Endothelial cell of umbilical vein (primary cell): ENCODE measurements at regions of chr4 and their contacts with region 1.

Region 1: GRCh38 chr4:140756319-140757231 is at the start of gene TBC1D9:
- DNase-seq: peak; percentile 97
- H3K4me3 ChIP-seq: peak within 1 kb of the TSS; percentile 69 to 89 (median 79)
- H3K27ac ChIP-seq: peak within 1 kb of the TSS; percentile 98
- H3K4me1 ChIP-seq: peaks cover 14% of the 10 kb centered on the region
- H3K27me3 ChIP-seq: no peaks in the 10 kb centered on the region
- CTCF ChIP-seq: peak; percentile 4 to 9
- POLR2A ChIP-seq: peak; percentile 72
- total RNA-seq, gene TBC1D9: 43.4 and 45.3 TPM in 2 replicates

Region 2: DNA sequence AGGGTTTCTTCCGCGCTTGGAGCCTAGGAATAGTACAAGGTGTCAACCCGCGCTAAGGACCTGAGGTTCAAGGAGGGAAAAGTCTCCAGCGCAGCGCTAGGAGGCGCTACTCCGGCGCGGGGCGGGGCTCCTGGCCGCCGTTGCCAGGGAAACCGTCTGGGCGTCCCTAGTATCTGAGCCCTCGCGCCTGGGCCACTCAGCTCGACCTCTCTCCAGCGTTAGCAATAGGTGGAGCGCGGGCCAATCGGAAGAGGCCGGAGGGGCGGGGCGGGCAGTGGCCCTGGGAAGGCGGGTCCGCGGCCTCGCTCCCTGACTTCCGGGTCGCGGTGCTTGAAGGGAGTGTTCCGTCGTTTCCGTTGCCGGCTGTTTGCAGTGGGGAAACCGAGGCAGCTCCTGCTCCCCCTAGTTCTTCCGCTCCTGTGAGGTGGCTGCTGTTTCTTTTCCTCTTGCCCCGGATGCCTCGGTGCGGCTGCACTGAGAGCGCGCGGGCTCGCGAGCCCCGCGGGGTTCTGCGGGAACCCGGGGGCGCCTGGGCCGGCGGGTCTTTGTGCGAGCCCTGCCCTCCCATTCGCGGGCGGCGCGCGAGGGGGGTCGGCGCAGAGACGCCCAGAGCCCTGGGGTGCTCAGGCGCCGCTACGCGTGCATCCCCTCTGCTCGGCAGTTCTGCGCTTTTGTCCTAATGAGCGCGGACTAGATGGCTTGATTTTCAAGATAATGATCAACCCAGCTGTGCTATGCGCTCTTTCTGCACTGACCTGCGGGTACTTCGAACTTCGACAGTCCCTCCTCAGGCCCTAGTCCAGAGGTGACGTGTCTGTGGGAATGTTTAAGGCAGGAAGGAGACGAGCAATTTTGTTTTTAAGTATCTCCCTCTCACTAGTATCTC is 232.5 kb before region 1 on chr4 and contains the start of gene ELMOD2:
- CTCF ChIA-PET with region 1: no interaction called
- POLR2A ChIA-PET with region 1: no interaction called
- dilution Hi-C with region 1: no loop called
- intact Hi-C with region 1: loop called (anchors 1 kb)
- DNase-seq: peak; percentile 97
- H3K4me3 ChIP-seq: peak within 1 kb of the TSS; percentile 38 to 87 (median 83)
- H3K27ac ChIP-seq: peak within 1 kb of the TSS; percentile 21
- H3K4me1 ChIP-seq: peaks cover 14% of the 10 kb centered on the region
- H3K27me3 ChIP-seq: peaks cover 0 to 2% of the 10 kb centered on the region in 2 experiments
- CTCF ChIP-seq: peak; percentile 97 to 99
- POLR2A ChIP-seq: peak; percentile 80
- total RNA-seq, gene ELMOD2: 20.5 and 23.6 TPM in 2 replicates

Region 3: GRCh38 chr4:140680686-140681085 is 75.9 kb before region 1 on chr4:
- CTCF ChIA-PET with region 1: interaction called, 3 read pairs
- POLR2A ChIA-PET with region 1: no interaction called
- dilution Hi-C with region 1: no loop called
- intact Hi-C with region 1: loop called (anchors 5 kb)
- DNase-seq: no peak
- H3K4me3 ChIP-seq: no peak overlapping the region
- H3K27ac ChIP-seq: no peak overlapping the region
- H3K4me1 ChIP-seq: peaks cover 12% of the 10 kb centered on the region
- H3K27me3 ChIP-seq: no peaks in the 10 kb centered on the region
- CTCF ChIP-seq: no peak
- POLR2A ChIP-seq: no peak

Region 4: DNA sequence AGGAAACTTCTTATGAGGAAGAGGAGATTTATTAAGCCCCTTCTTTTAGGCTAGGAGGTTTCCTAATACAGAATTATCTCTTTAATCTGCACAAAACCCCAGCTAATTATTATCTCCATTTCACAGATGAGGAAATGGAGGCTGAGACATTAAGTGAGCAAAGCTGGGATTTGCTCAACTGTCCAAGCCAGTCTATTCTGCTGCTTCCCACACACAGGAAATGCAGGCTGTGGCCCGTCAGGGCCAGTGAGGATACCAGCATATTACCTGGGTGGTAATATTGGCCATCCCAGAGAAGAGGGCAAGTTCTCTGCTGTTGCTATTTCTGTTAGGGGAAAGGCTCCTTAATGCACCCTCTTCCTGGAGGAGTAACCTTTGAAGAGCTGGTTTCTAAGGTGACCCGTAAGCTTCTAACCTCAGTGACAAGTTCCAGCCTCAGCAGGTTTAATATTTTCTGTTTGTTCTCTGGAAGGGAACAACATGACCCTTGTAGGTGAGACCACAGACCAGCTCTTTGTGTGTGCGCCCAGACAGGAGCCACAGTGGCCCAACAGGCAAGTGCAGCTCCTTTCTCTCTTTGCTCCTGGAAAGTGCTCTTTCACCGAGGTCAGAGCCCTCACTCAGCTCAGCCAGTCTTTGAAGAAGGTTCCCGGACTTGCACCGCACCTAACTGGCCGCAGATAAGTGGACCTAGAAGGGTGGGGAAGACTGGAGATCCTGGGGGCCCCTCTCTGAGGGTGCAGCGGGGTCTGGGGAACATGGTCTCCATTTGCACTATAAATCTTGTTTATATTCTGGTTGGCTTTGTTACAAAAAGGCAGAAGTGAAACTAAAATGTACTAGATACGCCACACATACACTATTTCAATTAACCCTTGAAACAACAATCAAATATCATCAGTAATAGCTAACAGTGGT is 35.9 kb before region 1 on chr4:
- CTCF ChIA-PET with region 1: interaction called, 12 read pairs
- POLR2A ChIA-PET with region 1: interaction called, 17 read pairs
- dilution Hi-C with region 1: no loop called
- intact Hi-C with region 1: loop called (anchors 2 kb)
- DNase-seq: no peak
- H3K4me3 ChIP-seq: no peak overlapping the region
- H3K27ac ChIP-seq: no peak overlapping the region
- H3K4me1 ChIP-seq: peaks cover 32% of the 10 kb centered on the region
- H3K27me3 ChIP-seq: no peaks in the 10 kb centered on the region
- CTCF ChIP-seq: no peak
- POLR2A ChIP-seq: no peak

Region 5: GRCh38 chr4:140736673-140737343 is 19.8 kb before region 1 on chr4:
- CTCF ChIA-PET with region 1: interaction called, 6 read pairs
- POLR2A ChIA-PET with region 1: interaction called, 3 read pairs
- dilution Hi-C with region 1: no loop called
- intact Hi-C with region 1: loop called (anchors 2 kb)
- DNase-seq: peak; percentile 45
- H3K4me3 ChIP-seq: no peak overlapping the region
- H3K27ac ChIP-seq: no peak overlapping the region
- H3K4me1 ChIP-seq: peaks cover 22% of the 10 kb centered on the region
- H3K27me3 ChIP-seq: no peaks in the 10 kb centered on the region
- CTCF ChIP-seq: no peak
- POLR2A ChIP-seq: no peak